ENCODE measurements at regions of chrX and their contacts with region 1.

Region 1: GRCh38 chrX:153460845-153461244 is 9.5 kb downstream of the HAUS7 start:
- DNase-seq: peak; percentile 15
- ATAC-seq: peak; percentile 88
- H3K4me3 ChIP-seq: no peak overlapping the region
- H3K27ac ChIP-seq: no peak overlapping the region
- H3K4me1 ChIP-seq: no peaks in the 10 kb centered on the region
- H3K27me3 ChIP-seq: no peaks in the 10 kb centered on the region
- CTCF ChIP-seq: peak; percentile 78
- EP300 ChIP-seq: no peak
- POLR2A ChIP-seq: no peak
- RAD21 ChIP-seq: no peak

Region 2: DNA sequence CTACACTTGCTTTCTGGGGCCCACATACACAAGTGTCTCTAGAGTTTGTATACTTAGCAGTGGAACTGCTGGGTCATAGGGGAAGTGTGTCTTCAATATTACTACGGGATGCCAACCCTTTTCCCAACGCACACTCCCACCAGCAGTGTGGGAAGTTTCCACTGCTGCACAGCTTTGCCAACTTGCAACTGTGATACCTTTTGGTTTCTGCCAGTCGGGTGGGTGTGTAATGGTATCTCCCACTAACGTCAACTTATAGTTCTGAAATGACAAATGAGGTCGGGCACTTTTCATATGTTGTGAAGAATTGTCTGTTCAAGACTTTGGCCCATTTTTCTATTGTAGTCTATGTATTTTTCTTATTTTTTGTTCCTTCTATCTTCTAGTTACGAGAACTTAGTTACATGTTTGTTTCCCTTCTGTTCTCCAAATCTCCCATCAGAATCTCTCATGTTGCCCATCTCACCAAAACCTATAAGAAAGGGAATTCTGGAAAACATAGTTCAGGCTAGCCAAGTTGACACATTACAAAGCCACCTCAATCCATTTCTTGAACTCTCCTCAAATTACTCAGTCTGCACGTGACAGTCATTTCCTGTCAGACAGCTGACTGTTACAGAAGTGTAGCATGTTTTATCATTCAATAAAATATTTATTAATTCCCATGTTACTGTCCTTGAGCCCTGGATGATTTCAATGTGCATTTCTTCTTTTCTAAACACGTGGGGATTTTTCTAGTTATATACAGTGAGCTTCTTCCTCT is 90.4 kb before region 1 on chrX:
- CTCF ChIA-PET with region 1: no interaction called
- POLR2A ChIA-PET with region 1: no interaction called
- in situ Hi-C with region 1: no loop called
- intact Hi-C with region 1: no loop called
- DNase-seq: no peak
- ATAC-seq: no peak
- H3K4me3 ChIP-seq: no peak overlapping the region
- H3K27ac ChIP-seq: no peak overlapping the region
- H3K4me1 ChIP-seq: no peaks in the 10 kb centered on the region
- H3K27me3 ChIP-seq: no peaks in the 10 kb centered on the region
- CTCF ChIP-seq: no peak
- EP300 ChIP-seq: no peak
- POLR2A ChIP-seq: no peak
- RAD21 ChIP-seq: no peak

Region 3: GRCh38 chrX:153507484-153508178 is 46.8 kb after region 1 on chrX:
- CTCF ChIA-PET with region 1: interaction called, 20 read pairs
- POLR2A ChIA-PET with region 1: no interaction called
- in situ Hi-C with region 1: loop called (anchors 10 kb)
- intact Hi-C with region 1: loop called (anchors 1 kb)
- DNase-seq: peak; percentile 27
- ATAC-seq: peak; percentile 96
- H3K4me3 ChIP-seq: no peak overlapping the region
- H3K27ac ChIP-seq: no peak overlapping the region
- H3K4me1 ChIP-seq: no peaks in the 10 kb centered on the region
- H3K27me3 ChIP-seq: no peaks in the 10 kb centered on the region
- CTCF ChIP-seq: peak; percentile 94
- EP300 ChIP-seq: no peak
- POLR2A ChIP-seq: no peak
- RAD21 ChIP-seq: peak; percentile 87

Region 4: DNA sequence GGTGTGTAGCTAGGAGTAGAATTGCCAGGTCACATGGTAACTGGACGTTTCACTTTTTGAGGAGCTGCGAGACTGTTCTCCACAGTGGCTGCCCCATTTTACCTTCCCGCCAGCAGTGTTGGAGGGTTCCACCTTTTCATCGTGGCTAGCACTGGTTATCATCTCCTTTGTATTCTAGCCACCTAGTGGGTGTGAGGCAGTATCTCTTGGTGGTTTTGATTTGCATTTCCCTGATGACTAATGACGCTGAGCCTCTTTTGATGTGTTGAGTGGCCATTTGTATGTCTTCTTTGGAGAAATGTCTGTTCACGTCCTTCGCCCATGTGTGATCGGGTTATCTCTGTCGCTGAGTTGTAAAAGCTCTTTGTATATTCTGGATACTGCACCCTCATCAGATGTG is 274.4 kb after region 1 on chrX:
- CTCF ChIA-PET with region 1: no interaction called
- POLR2A ChIA-PET with region 1: no interaction called
- in situ Hi-C with region 1: no loop called
- intact Hi-C with region 1: no loop called
- DNase-seq: no peak
- ATAC-seq: no peak
- H3K4me3 ChIP-seq: no peak overlapping the region
- H3K27ac ChIP-seq: no peak overlapping the region
- H3K4me1 ChIP-seq: peaks cover 24% of the 10 kb centered on the region
- H3K27me3 ChIP-seq: no peaks in the 10 kb centered on the region
- CTCF ChIP-seq: no peak
- EP300 ChIP-seq: no peak
- POLR2A ChIP-seq: no peak
- RAD21 ChIP-seq: no peak